Gastrocnemius medialis (tissue), 4 donors: ENCODE measurements at regions of chr7 and their contacts with region 1.

Region 1: DNA sequence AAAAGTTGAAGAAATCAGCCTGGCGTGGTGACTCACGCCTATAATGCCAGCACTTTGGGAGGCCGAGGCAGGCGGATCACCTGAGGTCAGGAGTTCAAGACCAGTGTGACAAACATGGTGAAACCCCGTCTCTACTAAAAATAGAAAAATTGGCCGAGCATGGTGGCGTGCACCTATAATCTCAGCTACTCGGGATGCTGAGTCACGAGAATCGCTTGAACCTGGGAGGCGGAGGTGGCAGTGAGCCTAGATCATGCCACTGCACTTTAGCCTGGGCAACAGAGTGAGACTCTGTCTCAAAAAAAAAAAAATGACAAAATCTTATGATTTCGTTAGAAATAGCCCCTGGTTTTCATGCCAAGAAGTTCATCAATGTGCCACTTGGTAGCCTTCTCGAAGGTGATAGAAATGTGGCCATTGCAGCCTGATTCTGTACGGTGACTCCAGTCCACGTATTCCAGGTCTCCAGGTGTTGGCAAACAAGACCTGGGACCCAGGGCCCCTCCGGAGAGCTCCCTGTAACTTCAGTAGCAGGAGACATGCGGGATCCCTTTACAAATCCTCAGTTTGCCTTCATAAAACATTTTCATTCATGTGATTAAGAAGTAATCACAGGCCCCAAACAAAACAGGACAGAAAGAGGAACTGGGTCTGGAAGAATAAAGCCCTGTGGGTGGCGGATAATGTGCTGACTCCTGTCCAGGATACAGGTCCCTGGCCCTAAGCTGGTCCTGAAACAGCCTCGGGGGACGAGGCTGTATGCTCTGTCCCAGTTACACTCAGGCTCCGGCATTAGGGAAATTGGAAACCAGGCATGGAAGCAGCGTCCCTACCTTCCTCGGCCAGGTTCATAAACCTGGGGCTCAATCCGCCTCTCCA is 207.3 kb upstream of the SH2B2 start:
- DNase-seq: peak; percentile 8 to 73
- ATAC-seq: peak; percentile 55 to 60
- H3K4me3 ChIP-seq: no peak overlapping the region
- H3K27ac ChIP-seq: peak overlapping the region in 2 of 4 donors; percentile 45 to 48
- H3K4me1 ChIP-seq: peaks cover 0 to 10% of the 10 kb centered on the region in 2 donors
- H3K27me3 ChIP-seq: no peaks in the 10 kb centered on the region
- CTCF ChIP-seq: no peak
- POLR2A ChIP-seq: no peak

Region 2: GRCh38 chr7:100604028-100604975 is 1475.1 kb before region 1 on chr7:
- in situ Hi-C with region 1: no loop called
- intact Hi-C with region 1: loop called (anchors 10 kb)
- DNase-seq: peak; percentile 38 to 51
- ATAC-seq: peak; percentile 69 to 80
- H3K4me3 ChIP-seq: peak overlapping the region; percentile 75 to 99 (median 89)
- H3K27ac ChIP-seq: peak overlapping the region; percentile 74 to 85 (median 77)
- H3K4me1 ChIP-seq: peaks cover 4 to 13% of the 10 kb centered on the region in 2 donors
- H3K27me3 ChIP-seq: peaks cover 0 to 15% (median 8%) of the 10 kb centered on the region in 3 donors
- CTCF ChIP-seq: peak in 4 of 5 experiments; percentile 37 to 55 (median 44)
- POLR2A ChIP-seq: peak; percentile 10 to 12

Region 3: GRCh38 chr7:101792051-101792681 is 287.2 kb before region 1 on chr7:
- in situ Hi-C with region 1: no loop called
- intact Hi-C with region 1: no loop called
- DNase-seq: peak; percentile 24 to 48
- ATAC-seq: peak; percentile 56 to 80
- H3K4me3 ChIP-seq: no peak overlapping the region
- H3K27ac ChIP-seq: no peak overlapping the region
- H3K4me1 ChIP-seq: no peaks in the 10 kb centered on the region
- H3K27me3 ChIP-seq: no peaks in the 10 kb centered on the region
- CTCF ChIP-seq: no peak
- POLR2A ChIP-seq: no peak

Region 4: GRCh38 chr7:101911800-101912715 is 167.3 kb before region 1 on chr7:
- in situ Hi-C with region 1: no loop called
- intact Hi-C with region 1: no loop called
- DNase-seq: peak; percentile 95 to 96
- ATAC-seq: peak; percentile 89 to 90
- H3K4me3 ChIP-seq: peak overlapping the region in 1 of 4 donors; percentile 20
- H3K27ac ChIP-seq: peak overlapping the region; percentile 92 to 97 (median 93)
- H3K4me1 ChIP-seq: peaks cover 45 to 46% of the 10 kb centered on the region in 2 donors
- H3K27me3 ChIP-seq: no peaks in the 10 kb centered on the region
- CTCF ChIP-seq: peak in 3 of 5 experiments; percentile 19 to 24 (median 23)
- POLR2A ChIP-seq: peak in 1 of 2 donors; percentile 44

Region 5: GRCh38 chr7:102044984-102045673 is 34.2 kb before region 1 on chr7:
- in situ Hi-C with region 1: no loop called
- intact Hi-C with region 1: no loop called
- DNase-seq: peak in 1 of 2 donors; percentile 40
- ATAC-seq: peak; percentile 51 to 55
- H3K4me3 ChIP-seq: peak overlapping the region; percentile 17 to 48 (median 41)
- H3K27ac ChIP-seq: peak overlapping the region; percentile 16 to 34 (median 28)
- H3K4me1 ChIP-seq: peaks cover 17 to 19% of the 10 kb centered on the region in 2 donors
- H3K27me3 ChIP-seq: no peaks in the 10 kb centered on the region
- CTCF ChIP-seq: no peak
- POLR2A ChIP-seq: no peak